ENCODE measurements at regions of chr1 and their contacts with region 1.

Region 1: DNA sequence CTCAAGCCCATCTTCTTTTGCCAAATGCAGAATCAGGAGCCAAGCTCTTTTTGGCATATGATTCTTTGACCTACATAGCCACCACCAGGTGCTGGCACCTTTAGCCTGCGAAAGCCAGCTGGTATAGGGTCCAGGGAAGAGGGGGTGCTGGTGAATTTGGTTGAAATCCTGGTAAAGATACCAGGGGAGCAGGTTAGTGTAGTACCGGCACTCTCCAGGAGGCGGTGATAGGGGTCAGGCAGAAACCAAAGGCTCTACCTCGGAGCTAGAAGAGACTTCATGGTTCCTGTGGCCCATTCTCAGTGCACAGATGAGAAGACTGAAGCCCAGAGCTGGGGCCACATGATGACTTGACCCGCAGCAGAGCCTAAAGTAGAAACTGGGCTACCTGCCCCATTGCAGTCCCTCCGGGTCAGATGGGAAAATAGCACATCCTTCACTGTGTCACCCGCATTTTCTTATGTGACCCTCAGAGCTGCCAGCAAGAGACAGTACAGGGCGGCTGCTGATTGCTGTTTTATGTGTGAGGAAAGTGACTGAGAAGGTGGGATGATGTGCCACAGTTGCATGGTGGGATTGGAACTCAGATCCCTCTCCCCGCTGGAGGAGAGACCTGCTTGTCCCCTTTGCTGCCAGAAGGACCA is 36.0 kb upstream of the IL19 start:
- DNase-seq: peak; percentile 80
- ATAC-seq: peak; percentile 80
- H3K4me3 ChIP-seq: no peak overlapping the region
- H3K4me3 Mint-ChIP-seq: no peak overlapping the region
- H3K27ac ChIP-seq: no peak overlapping the region
- H3K27ac Mint-ChIP-seq: peak overlapping the region; percentile 69
- H3K4me1 ChIP-seq: peaks cover 20 to 37% of the 10 kb centered on the region in 2 donors
- H3K4me1 Mint-ChIP-seq: peaks cover 45% of the 10 kb centered on the region
- H3K27me3 ChIP-seq: no peaks in the 10 kb centered on the region
- H3K27me3 Mint-ChIP-seq: no peaks in the 10 kb centered on the region
- CTCF ChIP-seq: peak; percentile 86

Region 2: GRCh38 chr1:206748348-206749030 is 13.9 kb after region 1 on chr1:
- CTCF ChIA-PET with region 1: interaction called, 13 read pairs
- POLR2A ChIA-PET with region 1: no interaction called
- intact Hi-C with region 1: no loop called
- DNase-seq: no peak
- ATAC-seq: no peak
- H3K4me3 ChIP-seq: no peak overlapping the region
- H3K4me3 Mint-ChIP-seq: no peak overlapping the region
- H3K27ac ChIP-seq: no peak overlapping the region
- H3K27ac Mint-ChIP-seq: no peak overlapping the region
- H3K4me1 ChIP-seq: no peaks in the 10 kb centered on the region
- H3K4me1 Mint-ChIP-seq: peaks cover 8% of the 10 kb centered on the region
- H3K27me3 ChIP-seq: no peaks in the 10 kb centered on the region
- H3K27me3 Mint-ChIP-seq: no peaks in the 10 kb centered on the region
- CTCF ChIP-seq: no peak

Region 3: GRCh38 chr1:206797534-206798383 is 63.1 kb after region 1 on chr1:
- CTCF ChIA-PET with region 1: interaction called, 278 read pairs
- POLR2A ChIA-PET with region 1: interaction called, 3 read pairs
- intact Hi-C with region 1: no loop called
- DNase-seq: peak; percentile 68
- ATAC-seq: peak; percentile 34
- H3K4me3 ChIP-seq: no peak overlapping the region
- H3K4me3 Mint-ChIP-seq: no peak overlapping the region
- H3K27ac ChIP-seq: no peak overlapping the region
- H3K27ac Mint-ChIP-seq: no peak overlapping the region
- H3K4me1 ChIP-seq: peaks cover 23 to 39% of the 10 kb centered on the region in 2 donors
- H3K4me1 Mint-ChIP-seq: peaks cover 63% of the 10 kb centered on the region
- H3K27me3 ChIP-seq: no peaks in the 10 kb centered on the region
- H3K27me3 Mint-ChIP-seq: no peaks in the 10 kb centered on the region
- CTCF ChIP-seq: peak; percentile 66

Region 4: DNA sequence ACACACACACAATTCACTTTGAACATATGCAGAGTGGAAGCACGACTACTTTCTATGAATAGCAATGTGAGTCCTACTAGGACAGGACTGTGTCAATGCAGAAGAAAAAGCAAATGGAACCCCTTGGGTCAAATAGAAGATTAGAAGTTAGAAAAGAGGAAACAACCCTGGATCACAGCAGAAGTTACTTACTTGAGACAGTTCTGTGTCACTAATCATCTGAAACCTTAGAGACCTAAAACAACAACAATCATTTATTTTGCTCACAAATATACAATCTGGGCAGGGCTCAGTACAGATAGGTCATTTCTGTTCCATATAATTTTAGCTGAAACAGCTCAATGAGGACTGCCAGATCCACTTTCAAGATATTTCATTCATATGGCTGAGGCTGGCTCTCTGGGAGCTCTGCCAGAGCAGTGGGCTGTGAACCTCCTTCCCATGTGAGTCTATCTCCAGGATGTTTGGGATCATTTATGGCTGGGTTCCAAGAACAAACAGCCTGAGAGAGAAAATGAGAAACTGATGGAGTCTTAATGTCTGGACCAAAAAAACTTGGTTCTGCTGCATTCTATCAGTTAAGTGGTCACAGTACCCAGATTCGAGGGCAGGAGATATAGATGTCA is 80.2 kb after region 1 on chr1:
- CTCF ChIA-PET with region 1: interaction called, 278 read pairs
- POLR2A ChIA-PET with region 1: no interaction called
- intact Hi-C with region 1: no loop called
- DNase-seq: peak; percentile 68
- ATAC-seq: peak; percentile 74
- H3K4me3 ChIP-seq: peak overlapping the region in 1 of 5 experiments; percentile 31
- H3K4me3 Mint-ChIP-seq: peak overlapping the region; percentile 62
- H3K27ac ChIP-seq: peak overlapping the region; percentile 81 to 82
- H3K27ac Mint-ChIP-seq: peak overlapping the region; percentile 88
- H3K4me1 ChIP-seq: peaks cover 33 to 44% of the 10 kb centered on the region in 2 donors
- H3K4me1 Mint-ChIP-seq: peaks cover 45% of the 10 kb centered on the region
- H3K27me3 ChIP-seq: no peaks in the 10 kb centered on the region
- H3K27me3 Mint-ChIP-seq: no peaks in the 10 kb centered on the region
- CTCF ChIP-seq: no peak

Region 5: GRCh38 chr1:206895830-206896242 is 161.2 kb after region 1 on chr1:
- CTCF ChIA-PET with region 1: interaction called, 10 read pairs
- POLR2A ChIA-PET with region 1: no interaction called
- intact Hi-C with region 1: no loop called
- DNase-seq: no peak
- ATAC-seq: no peak
- H3K4me3 ChIP-seq: no peak overlapping the region
- H3K4me3 Mint-ChIP-seq: no peak overlapping the region
- H3K27ac ChIP-seq: no peak overlapping the region
- H3K27ac Mint-ChIP-seq: no peak overlapping the region
- H3K4me1 ChIP-seq: peaks cover 4 to 5% of the 10 kb centered on the region in 2 donors
- H3K4me1 Mint-ChIP-seq: peaks cover 24% of the 10 kb centered on the region
- H3K27me3 ChIP-seq: no peaks in the 10 kb centered on the region
- H3K27me3 Mint-ChIP-seq: no peaks in the 10 kb centered on the region
- CTCF ChIP-seq: no peak

Region 6: GRCh38 chr1:206935491-206936067 is 201.0 kb after region 1 on chr1:
- CTCF ChIA-PET with region 1: interaction called, 53 read pairs
- POLR2A ChIA-PET with region 1: no interaction called
- intact Hi-C with region 1: loop called (anchors 1 kb)
- DNase-seq: peak; percentile 59
- ATAC-seq: peak; percentile 14
- H3K4me3 ChIP-seq: no peak overlapping the region
- H3K4me3 Mint-ChIP-seq: no peak overlapping the region
- H3K27ac ChIP-seq: no peak overlapping the region
- H3K27ac Mint-ChIP-seq: no peak overlapping the region
- H3K4me1 ChIP-seq: peaks cover 27 to 30% of the 10 kb centered on the region in 2 donors
- H3K4me1 Mint-ChIP-seq: peaks cover 30% of the 10 kb centered on the region
- H3K27me3 ChIP-seq: no peaks in the 10 kb centered on the region
- H3K27me3 Mint-ChIP-seq: no peaks in the 10 kb centered on the region
- CTCF ChIP-seq: peak; percentile 51

Region 7: GRCh38 chr1:207463021-207463420 is 728.4 kb after region 1 on chr1:
- CTCF ChIA-PET with region 1: no interaction called
- POLR2A ChIA-PET with region 1: no interaction called
- intact Hi-C with region 1: no loop called
- DNase-seq: no peak
- ATAC-seq: no peak
- H3K4me3 ChIP-seq: no peak overlapping the region
- H3K4me3 Mint-ChIP-seq: no peak overlapping the region
- H3K27ac ChIP-seq: no peak overlapping the region
- H3K27ac Mint-ChIP-seq: peak overlapping the region; percentile 2
- H3K4me1 ChIP-seq: peaks cover 40 to 59% of the 10 kb centered on the region in 2 donors
- H3K4me1 Mint-ChIP-seq: peaks cover 56% of the 10 kb centered on the region
- H3K27me3 ChIP-seq: no peaks in the 10 kb centered on the region
- H3K27me3 Mint-ChIP-seq: no peaks in the 10 kb centered on the region
- CTCF ChIP-seq: no peak